A549 (cell line): ENCODE measurements at regions of chr14 and their contacts with region 1.

Region 1: DNA sequence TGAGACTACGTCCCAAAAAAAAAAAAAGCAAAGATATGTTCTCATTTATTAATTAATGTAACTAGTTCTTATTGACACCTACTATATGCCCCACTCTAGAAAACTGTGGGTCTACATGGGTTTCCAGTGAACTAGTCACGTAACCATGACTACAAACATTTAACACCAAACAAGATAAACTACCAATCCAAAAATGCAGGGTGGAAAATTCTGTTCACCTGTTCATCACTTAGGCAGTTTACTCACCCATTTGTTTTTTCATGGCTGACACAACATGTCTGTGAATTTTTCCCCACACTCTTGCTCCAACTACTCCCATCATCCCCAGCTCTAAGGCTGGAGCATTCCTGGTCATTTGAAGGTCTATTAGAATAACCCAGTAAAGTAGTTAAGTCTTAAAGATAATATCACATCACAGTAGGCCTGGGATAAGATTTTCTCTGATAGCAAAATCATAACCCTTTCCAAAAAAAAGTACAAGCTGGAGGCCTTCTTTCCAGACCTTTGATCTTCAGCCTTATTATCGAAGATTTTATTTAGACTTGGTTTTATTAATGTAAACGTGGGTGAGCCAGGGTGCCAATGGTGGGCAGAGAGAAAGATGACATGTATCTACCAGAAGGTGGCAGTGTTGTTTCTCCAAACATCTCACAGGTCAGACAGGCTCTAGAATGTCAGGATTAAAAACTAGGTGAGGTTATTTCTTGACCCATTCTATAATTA is 61.6 kb upstream of the DAAM1 start:
- DNase-seq: peak; percentile 52 to 68
- ATAC-seq: peak; percentile 93 to 97
- H3K4me3 ChIP-seq: no peak overlapping the region
- H3K27ac ChIP-seq: no peak overlapping the region
- H3K4me1 ChIP-seq: no peaks in the 10 kb centered on the region
- CTCF ChIP-seq: peak; percentile 90
- EP300 ChIP-seq: no peak
- POLR2A ChIP-seq: no peak
- RAD21 ChIP-seq: peak; percentile 95

Region 2: GRCh38 chr14:58637391-58638230 is 489.3 kb before region 1 on chr14 and contains the start of gene DACT1:
- CTCF ChIA-PET with region 1: interaction called, 27 read pairs
- POLR2A ChIA-PET with region 1: interaction called, 4 read pairs
- DNase-seq: peak; percentile 16 to 35
- ATAC-seq: peak; percentile 61 to 71
- H3K4me3 ChIP-seq: peak within 1 kb of the TSS; percentile 77
- H3K27ac ChIP-seq: peak within 1 kb of the TSS; percentile 62 to 83; a peak in 5 of 6 replicates
- H3K4me1 ChIP-seq: peaks cover 3% of the 10 kb centered on the region; the same call in 1 of the 3 replicates
- CTCF ChIP-seq: 0 out of 3 replicates have a peak, but pooled peaks have one; percentile 7
- EP300 ChIP-seq: no peak
- POLR2A ChIP-seq: no peak
- RAD21 ChIP-seq: no peak
- polyA plus RNA-seq, gene DACT1: 0.37 and 0.45 TPM in 2 replicates

Region 3: DNA sequence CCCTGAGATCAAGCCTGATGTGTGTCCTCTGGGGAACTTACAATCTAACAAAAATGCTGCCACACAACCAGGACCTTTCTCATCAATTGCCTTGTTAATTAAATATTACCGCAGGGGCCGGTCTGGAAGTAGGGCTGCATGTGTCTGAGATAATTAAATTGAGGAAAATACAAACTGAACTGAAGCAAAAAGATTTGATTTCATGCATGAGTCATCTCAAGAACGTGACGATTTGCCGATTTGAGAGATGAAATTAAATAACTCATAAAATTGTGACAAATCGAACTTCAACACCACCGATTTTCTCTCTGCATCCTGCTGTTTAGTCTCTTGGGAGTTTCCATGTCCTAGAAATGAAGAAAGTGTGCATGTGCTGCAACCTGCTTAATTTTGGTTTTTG is 33.0 kb before region 1 on chr14:
- CTCF ChIA-PET with region 1: interaction called, 13 read pairs
- POLR2A ChIA-PET with region 1: no interaction called
- DNase-seq: no peak
- ATAC-seq: no peak
- H3K4me3 ChIP-seq: no peak overlapping the region
- H3K27ac ChIP-seq: no peak overlapping the region
- H3K4me1 ChIP-seq: peaks cover 18% of the 10 kb centered on the region
- CTCF ChIP-seq: no peak
- EP300 ChIP-seq: no peak
- POLR2A ChIP-seq: no peak
- RAD21 ChIP-seq: no peak

Region 4: GRCh38 chr14:59107819-59108428 is 18.9 kb before region 1 on chr14:
- CTCF ChIA-PET with region 1: interaction called, 17 read pairs
- POLR2A ChIA-PET with region 1: no interaction called
- DNase-seq: no peak
- ATAC-seq: no peak
- H3K4me3 ChIP-seq: no peak overlapping the region
- H3K27ac ChIP-seq: no peak overlapping the region
- H3K4me1 ChIP-seq: no peaks in the 10 kb centered on the region
- CTCF ChIP-seq: no peak
- EP300 ChIP-seq: no peak
- POLR2A ChIP-seq: no peak
- RAD21 ChIP-seq: no peak

Region 5: GRCh38 chr14:59148334-59148900 is 21.5 kb after region 1 on chr14:
- CTCF ChIA-PET with region 1: interaction called, 10 read pairs
- POLR2A ChIA-PET with region 1: no interaction called
- DNase-seq: no peak
- ATAC-seq: no peak
- H3K4me3 ChIP-seq: no peak overlapping the region
- H3K27ac ChIP-seq: no peak overlapping the region
- H3K4me1 ChIP-seq: no peaks in the 10 kb centered on the region
- CTCF ChIP-seq: no peak
- EP300 ChIP-seq: no peak
- POLR2A ChIP-seq: no peak
- RAD21 ChIP-seq: no peak

Region 6: GRCh38 chr14:59576332-59577294 is 449.7 kb after region 1 on chr14 and contains the start of gene CCDC175:
- CTCF ChIA-PET with region 1: interaction called, 69 read pairs
- POLR2A ChIA-PET with region 1: no interaction called
- DNase-seq: peak; percentile 77 to 87
- ATAC-seq: peak; percentile 96 to 100
- H3K4me3 ChIP-seq: peak within 1 kb of the TSS; percentile 58
- H3K27ac ChIP-seq: peak within 1 kb of the TSS; percentile 52 to 71; a peak in 4 of 6 replicates
- H3K4me1 ChIP-seq: no peaks in the 10 kb centered on the region
- CTCF ChIP-seq: peak; percentile 91
- EP300 ChIP-seq: no peak
- POLR2A ChIP-seq: no peak
- RAD21 ChIP-seq: peak; percentile 78 to 85
- polyA plus RNA-seq, gene CCDC175: not detected in 2 replicates